ENCODE measurements at regions of chr1 and their contacts with region 1.

Region 1: DNA sequence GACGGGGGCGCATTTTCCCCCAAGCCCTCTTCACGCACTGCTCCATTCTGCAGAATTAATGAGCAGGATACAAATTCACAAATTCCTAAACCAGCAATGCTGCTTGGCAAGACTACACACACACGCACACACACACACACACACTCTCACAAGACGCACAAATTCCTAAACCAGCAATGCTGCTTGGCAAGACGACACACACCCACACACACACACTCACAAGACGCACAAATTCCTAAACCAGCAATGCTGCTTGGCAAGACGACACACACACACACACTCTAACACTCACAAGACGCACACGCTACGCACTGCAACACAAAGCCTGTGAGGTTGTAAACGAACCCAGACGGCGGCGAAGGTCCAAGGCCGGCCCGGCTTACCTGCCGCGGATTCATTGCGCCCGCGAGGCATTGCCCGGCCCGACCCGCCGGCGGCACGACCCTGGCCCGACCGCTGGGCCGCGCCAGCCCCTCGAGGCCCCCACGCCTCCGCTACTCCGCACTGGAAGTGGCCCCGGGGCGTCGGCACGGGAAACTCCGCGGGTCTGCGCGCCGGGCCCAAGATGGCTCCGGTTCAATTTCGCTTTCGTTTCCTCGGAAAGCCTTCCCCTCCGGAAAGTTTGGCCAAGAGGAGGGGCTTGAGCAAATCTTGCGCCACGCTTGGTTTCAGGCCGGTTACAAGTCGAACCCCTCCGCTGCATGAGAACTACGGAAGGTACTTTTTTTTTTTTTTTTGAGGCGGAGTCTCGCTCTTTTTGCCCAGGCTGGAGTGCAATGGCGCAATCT is at the start of gene ADAR:
- DNase-seq: peak; percentile 98 to 99 (median 99)
- H3K4me3 ChIP-seq: peak within 1 kb of the TSS; percentile 56 to 100 (median 95)
- H3K27ac ChIP-seq: peak within 1 kb of the TSS; percentile 88 to 96
- H3K4me1 ChIP-seq: peaks cover 21 to 38% (median 28%) of the 10 kb centered on the region in 4 experiments
- H3K27me3 ChIP-seq: no peaks in the 10 kb centered on the region

Region 2: DNA sequence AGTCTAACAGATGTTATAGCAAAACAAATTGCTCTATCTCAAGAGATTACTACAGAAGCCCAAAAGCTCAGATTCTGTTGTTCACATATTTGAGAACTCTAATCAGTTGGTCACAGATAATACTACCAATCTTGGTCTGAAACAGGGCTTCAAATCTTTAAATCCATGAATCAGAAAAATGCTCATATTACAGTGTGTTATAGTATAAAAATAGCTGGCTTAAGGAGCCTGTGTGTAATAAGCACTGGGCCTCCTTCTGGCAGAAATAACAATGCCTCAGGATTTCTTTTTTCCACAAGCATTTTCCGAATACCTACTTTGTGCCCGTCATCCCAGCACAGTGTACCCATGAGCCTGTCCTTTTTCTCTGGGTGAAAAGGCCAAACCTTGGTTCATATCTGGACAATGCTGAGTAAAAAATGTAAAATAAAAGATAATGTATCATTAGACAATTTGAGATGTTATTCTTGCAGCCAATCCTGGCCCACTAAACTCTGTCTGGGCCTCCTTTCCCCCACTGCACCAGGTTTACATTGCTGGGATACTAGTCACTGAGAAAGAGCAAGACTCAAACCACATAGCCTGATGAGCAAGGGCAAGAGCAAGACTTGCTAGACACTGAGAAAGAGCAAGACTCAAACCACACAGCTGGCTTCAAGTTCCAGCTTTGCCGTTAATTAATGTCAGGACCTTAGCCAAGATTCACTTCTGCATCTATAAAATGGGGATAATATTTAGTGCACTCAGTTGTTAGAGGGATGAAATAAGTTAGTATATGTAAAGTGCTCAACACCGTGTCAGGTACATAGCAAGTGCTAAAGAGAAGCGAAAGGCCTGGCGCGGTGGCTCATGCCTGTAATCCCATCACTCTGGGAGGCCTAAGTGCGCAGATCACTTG is 17.2 kb after region 1 on chr1:
- CTCF ChIA-PET with region 1: interaction called, 15 read pairs
- POLR2A ChIA-PET with region 1: interaction called, 4 read pairs
- DNase-seq: no peak
- H3K4me3 ChIP-seq: no peak overlapping the region
- H3K27ac ChIP-seq: no peak overlapping the region
- H3K4me1 ChIP-seq: peaks cover 10 to 48% (median 29%) of the 10 kb centered on the region in 4 experiments
- H3K27me3 ChIP-seq: no peaks in the 10 kb centered on the region

Region 3: DNA sequence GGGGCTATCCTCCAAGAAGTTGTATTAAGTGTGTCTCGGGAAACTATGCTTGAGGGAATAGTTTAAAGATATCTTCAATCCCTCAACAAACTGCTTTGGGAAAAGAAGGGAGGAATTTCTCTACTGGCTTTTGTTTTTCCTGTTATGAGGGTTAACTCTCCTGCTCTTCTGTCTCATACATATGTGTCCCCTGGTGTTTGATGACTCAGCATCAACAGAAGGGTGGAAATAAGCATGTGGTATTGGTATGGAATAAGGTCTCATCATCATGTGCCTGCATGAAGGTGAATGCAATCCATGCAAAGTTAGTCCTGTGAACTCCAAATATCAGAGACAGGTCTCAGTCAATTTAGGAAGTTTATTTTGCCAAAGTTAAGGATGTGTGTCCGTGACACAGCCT is 27.4 kb after region 1 on chr1:
- CTCF ChIA-PET with region 1: no interaction called
- POLR2A ChIA-PET with region 1: no interaction called
- DNase-seq: peak in 1 of 3 donors; percentile 6
- H3K4me3 ChIP-seq: no peak overlapping the region
- H3K27ac ChIP-seq: no peak overlapping the region
- H3K4me1 ChIP-seq: no peaks in the 10 kb centered on the region
- H3K27me3 ChIP-seq: no peaks in the 10 kb centered on the region

Measured in common myeloid progenitor, CD34-positive (primary cell).